Spleen (tissue), 13 donors: ENCODE measurements at regions of chr1 and their contacts with region 1.

Region 1: GRCh38 chr1:21176586-21177555 is at the start of gene EIF4G3:
- DNase-seq: peak; percentile 100
- H3K4me3 ChIP-seq: peak within 1 kb of the TSS; percentile 55 to 95 (median 76)
- H3K27ac ChIP-seq: peak within 1 kb of the TSS; percentile 87 to 98 (median 94)
- H3K4me1 ChIP-seq: peaks cover 10 to 47% (median 21%) of the 10 kb centered on the region in 6 donors
- H3K27me3 ChIP-seq: no peaks in the 10 kb centered on the region
- CTCF ChIP-seq: peak in 1 of 11 experiments; percentile 25
- POLR2A ChIP-seq: peak in 2 of 3 donors; percentile 45 to 62
- total RNA-seq, gene EIF4G3: 62.7 to 97.3 (median 75.0) TPM

Region 2: GRCh38 chr1:20786253-20787028 is 390.4 kb before region 1 on chr1:
- intact Hi-C with region 1: loop called (anchors 10 kb)
- DNase-seq: peak; percentile 98
- H3K4me3 ChIP-seq: peak overlapping the region; percentile 88 to 99 (median 96)
- H3K27ac ChIP-seq: peak overlapping the region; percentile 96 to 99 (median 98)
- H3K4me1 ChIP-seq: peaks cover 16 to 59% (median 52%) of the 10 kb centered on the region in 6 donors
- H3K27me3 ChIP-seq: no peaks in the 10 kb centered on the region
- CTCF ChIP-seq: peak in 4 of 11 experiments; percentile 10 to 47 (median 20)
- POLR2A ChIP-seq: no peak

Region 3: DNA sequence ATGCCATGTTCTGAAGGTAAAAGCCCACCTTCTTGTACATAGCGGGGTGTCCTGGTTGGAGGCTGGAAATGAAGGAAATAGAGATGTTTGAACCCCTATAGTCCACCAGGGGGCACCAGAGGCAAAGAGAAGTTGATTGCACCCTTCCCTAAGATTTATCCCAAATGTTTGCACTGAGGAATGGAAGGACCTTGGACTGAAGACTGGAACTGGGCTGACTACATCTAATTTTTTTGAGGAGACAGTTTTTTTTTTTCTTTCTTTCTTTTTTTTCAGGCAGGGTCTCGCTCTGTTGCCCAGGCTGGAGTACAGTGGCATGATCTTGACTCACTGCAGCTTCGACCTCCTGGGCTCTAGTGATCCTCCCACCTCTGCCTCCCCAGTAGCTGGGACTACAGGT is 55.2 kb after region 1 on chr1:
- intact Hi-C with region 1: no loop called
- DNase-seq: no peak
- H3K4me3 ChIP-seq: no peak overlapping the region
- H3K27ac ChIP-seq: no peak overlapping the region
- H3K4me1 ChIP-seq: no peaks in the 10 kb centered on the region
- H3K27me3 ChIP-seq: no peaks in the 10 kb centered on the region
- CTCF ChIP-seq: peak; percentile 57 to 86 (median 79)
- POLR2A ChIP-seq: no peak